H1 (cell line): ENCODE measurements at regions of chr14 and their contacts with region 1.

Region 1: DNA sequence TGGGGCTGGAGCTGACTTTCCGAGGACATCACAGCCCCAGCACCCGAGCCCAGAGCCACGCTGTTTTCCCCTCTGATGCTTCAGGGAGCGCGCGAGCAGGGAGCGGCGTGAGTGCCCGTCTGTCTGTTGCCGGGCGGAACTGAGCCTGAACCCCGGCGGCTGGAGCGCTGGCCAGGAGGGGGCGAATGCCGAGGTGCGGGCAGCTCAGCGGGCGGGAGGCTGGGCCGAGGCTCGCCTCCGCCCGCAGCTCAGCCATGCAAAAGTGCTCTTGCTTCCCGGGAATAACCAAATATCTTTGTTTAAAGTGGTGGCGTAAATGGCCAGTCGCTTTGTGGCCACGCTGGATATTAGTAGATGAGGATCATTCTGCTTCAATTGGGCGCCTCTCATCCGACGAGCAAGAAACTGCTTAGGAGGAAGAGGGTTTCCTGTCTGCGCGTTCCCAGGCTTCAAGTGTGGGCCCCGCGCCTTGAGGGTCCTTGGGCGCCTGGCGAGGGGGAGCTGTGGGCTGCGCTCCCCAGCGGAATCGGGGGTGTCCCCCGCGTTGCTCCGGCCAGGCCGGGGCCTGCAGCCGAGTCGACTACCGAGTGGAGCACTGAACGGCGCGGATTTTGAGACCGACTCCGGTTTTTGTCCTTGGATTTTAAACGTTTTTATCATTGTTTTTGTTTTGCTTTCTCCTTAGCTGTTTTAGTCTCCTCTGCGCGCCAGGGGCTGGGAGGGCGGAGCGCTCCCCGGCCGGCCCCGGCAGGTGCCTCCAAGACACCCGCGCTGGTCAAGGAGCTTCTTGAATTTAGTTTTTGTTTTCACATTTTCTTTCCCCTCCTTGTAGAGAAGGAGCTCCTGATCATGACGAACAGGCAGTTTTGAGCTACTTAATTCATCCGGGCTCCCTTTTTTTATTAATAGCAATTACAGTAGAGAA is 831 bp upstream of the NKX2-1 start:
- DNase-seq: peak in 1 of 2 experiments; percentile 80
- H3K4me3 ChIP-seq: peak overlapping the region in 3 of 4 experiments; percentile 11 to 47 (median 23); a peak in 4 of 8 replicates
- H3K27ac ChIP-seq: no peak overlapping the region
- H3K4me1 ChIP-seq: peaks cover 0 to 25% (median 14%) of the 10 kb centered on the region in 4 experiments; a peak in 6 of 7 replicates
- H3K27me3 ChIP-seq: peaks cover 94 to 100% (median 98%) of the 10 kb centered on the region in 4 experiments
- CTCF ChIP-seq: peak in 2 of 3 experiments; percentile 39 to 46; a peak in 3 of 4 replicates
- EP300 ChIP-seq: no peak
- POLR2A ChIP-seq: no peak
- RAD21 ChIP-seq: peak; percentile 12 to 21; a peak in 2 of 4 replicates

Region 2: GRCh38 chr14:36091096-36091495 is 429.8 kb before region 1 on chr14:
- CTCF ChIA-PET with region 1: interaction called, 12 read pairs
- POLR2A ChIA-PET with region 1: no interaction called
- DNase-seq: no peak
- H3K4me3 ChIP-seq: no peak overlapping the region
- H3K27ac ChIP-seq: no peak overlapping the region
- H3K4me1 ChIP-seq: no peaks in the 10 kb centered on the region
- H3K27me3 ChIP-seq: peaks cover 0 to 1% (median 0%) of the 10 kb centered on the region in 4 experiments; a peak in 1 of 7 replicates
- CTCF ChIP-seq: no peak
- EP300 ChIP-seq: no peak
- POLR2A ChIP-seq: no peak
- RAD21 ChIP-seq: no peak

Region 3: DNA sequence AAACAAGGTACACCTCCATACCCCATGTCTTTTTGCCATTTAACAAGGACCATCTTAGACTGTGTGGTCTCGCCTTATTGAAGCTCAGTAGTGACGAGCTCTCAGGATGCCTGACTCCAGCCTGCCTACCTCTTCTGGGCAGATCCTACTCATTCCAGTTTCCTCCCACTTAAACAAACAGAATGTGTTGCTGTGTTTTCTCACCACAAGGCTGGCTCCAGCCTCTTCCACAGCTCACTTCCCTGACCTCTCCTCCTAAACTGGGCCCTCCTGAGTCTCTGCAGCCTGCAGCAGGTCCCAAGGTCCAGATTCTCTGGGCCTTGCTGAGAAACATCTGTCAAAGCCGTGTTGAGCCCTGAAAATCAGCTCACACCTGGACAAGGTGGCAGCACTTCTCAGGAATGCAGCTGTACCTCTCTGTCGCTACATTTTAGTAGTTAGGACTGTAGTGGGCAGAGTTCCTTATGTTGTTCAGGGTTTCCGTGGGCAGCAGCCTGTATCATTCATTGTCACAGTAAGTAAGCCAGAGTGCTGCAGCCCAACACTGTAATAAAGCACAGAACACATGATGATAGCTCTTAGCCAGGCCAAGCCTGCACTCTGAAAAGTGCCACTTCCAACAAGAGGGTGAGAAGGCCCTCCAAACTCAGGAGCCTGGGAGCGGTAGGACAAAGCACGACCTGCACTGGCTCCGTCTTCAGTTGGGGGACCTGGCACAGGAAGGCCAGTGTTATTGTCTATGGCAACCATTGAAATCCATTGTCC is 69.4 kb before region 1 on chr14:
- CTCF ChIA-PET with region 1: interaction called, 68 read pairs
- POLR2A ChIA-PET with region 1: no interaction called
- DNase-seq: no peak
- H3K4me3 ChIP-seq: no peak overlapping the region
- H3K27ac ChIP-seq: no peak overlapping the region
- H3K4me1 ChIP-seq: no peaks in the 10 kb centered on the region; a peak in 1 of 7 replicates
- H3K27me3 ChIP-seq: peaks cover 0 to 13% (median 3%) of the 10 kb centered on the region in 4 experiments; a peak in 5 of 7 replicates
- CTCF ChIP-seq: no peak
- EP300 ChIP-seq: no peak
- POLR2A ChIP-seq: no peak
- RAD21 ChIP-seq: no peak

Region 4: DNA sequence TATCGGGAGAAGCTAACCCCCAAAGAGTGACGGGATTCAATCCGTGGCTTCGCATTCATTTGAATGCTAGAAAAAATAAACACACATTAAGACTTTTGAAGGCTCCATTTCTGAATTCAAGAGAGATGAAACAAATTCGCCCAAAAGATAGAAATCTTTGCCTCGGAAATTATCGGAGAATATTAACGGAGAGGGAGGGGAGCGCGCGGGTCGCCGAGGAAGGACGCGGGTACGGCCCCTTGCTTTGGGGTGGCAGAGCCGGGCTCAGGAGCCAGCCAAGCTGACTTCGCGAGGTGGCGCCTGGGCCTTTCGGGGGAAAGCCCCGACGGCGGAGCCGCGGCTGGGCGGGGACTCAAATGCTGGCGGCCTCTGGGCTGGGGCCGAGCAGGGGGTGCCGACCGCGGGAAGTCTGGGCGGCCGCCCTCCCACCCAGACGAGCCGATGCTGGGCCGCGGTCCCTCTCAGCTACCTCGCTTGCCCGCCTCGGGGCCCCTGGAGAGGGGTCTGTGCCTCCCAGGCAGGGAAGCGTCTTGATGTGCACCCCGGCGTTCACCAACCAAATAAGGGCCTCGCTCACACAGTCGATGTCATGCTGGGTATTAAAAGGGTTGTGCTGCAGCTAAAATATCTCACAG is 15.6 kb before region 1 on chr14:
- CTCF ChIA-PET with region 1: interaction called, 202 read pairs
- POLR2A ChIA-PET with region 1: interaction called, 19 read pairs
- DNase-seq: no peak
- H3K4me3 ChIP-seq: peak overlapping the region in 3 of 4 experiments; percentile 12 to 47 (median 26); a peak in 4 of 8 replicates
- H3K27ac ChIP-seq: no peak overlapping the region
- H3K4me1 ChIP-seq: peaks cover 10 to 22% (median 17%) of the 10 kb centered on the region in 4 experiments
- H3K27me3 ChIP-seq: peaks cover 78 to 100% (median 91%) of the 10 kb centered on the region in 4 experiments
- CTCF ChIP-seq: no peak
- EP300 ChIP-seq: no peak
- POLR2A ChIP-seq: no peak
- RAD21 ChIP-seq: no peak

Region 5: DNA sequence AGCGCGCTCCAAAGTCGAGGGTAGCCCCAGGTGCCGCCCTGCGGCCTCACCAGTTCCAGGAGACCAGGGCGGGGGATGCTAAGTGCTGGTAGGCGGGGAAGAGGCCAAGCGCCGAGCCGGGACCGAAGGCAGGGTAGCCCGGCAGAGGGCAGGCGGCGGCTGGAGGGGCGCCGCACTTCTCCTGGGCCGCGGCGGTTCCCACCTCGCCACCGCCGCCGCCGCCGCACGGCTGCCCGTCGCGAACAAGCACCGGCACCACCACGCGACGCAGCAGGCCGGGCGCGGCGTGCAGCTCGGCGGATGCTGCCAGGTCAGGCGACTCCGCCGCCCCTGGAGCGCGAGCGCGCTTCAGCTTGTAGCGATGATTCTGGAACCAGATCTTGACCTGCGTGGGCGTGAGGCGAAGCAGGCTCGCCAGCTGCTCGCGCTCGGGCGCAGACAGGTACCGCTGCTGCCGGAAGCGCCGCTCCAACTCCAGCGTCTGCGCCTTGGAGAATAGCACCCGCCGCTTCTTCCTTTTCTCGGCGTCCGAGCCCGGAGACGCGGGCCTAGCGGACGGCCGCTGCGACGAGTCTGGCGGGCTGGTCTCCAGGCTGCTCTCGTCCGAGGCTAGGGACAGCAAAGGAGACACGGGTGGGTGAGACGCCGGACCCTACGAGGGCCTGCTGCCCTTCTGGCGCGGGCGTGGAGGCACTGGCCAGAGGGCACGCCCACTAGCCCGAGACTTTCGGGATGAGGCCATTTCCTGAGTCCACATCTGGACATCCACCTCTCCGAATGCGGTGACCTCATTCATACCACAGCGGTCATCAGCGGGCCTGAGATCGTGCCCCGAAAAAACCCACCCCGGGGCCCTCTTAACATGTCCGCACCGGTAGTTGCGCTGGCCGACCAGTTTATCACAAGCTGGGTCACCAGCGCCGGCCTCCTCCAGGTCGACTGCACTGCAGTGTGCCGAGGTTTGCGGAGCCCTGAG is 60.3 kb after region 1 on chr14:
- CTCF ChIA-PET with region 1: interaction called, 395 read pairs
- POLR2A ChIA-PET with region 1: interaction called, 8 read pairs
- DNase-seq: peak in 1 of 2 experiments; percentile 74
- H3K4me3 ChIP-seq: peak overlapping the region in 3 of 4 experiments; percentile 19 to 58 (median 26); a peak in 7 of 8 replicates
- H3K27ac ChIP-seq: no peak overlapping the region
- H3K4me1 ChIP-seq: peaks cover 0 to 21% (median 11%) of the 10 kb centered on the region in 4 experiments; a peak in 5 of 7 replicates
- H3K27me3 ChIP-seq: peaks cover 95 to 100% (median 97%) of the 10 kb centered on the region in 4 experiments
- CTCF ChIP-seq: 0 out of 4 replicates have a peak, but pooled peaks of 1 of the 3 experiments have one; percentile 2
- EP300 ChIP-seq: no peak
- POLR2A ChIP-seq: no peak
- RAD21 ChIP-seq: no peak

Region 6: DNA sequence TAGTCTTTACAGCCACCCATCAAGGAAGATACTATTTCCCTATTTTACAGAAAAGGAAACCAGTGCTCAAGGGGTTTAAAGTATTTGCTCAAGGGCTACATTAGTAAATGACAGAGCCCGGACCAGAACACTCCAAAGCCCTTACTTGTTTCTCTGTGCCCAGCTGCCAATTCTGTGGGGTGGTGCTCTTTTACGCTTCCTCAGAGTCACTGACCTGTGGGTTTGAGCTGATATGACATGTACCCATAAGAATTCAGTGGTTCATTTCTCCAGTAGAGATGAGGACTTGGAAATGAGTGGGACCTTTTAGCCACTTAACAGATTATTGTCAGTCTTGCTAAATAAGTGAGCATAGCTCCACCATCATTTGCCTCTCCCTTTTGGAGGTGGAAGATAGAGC is 99.0 kb after region 1 on chr14:
- CTCF ChIA-PET with region 1: interaction called, 14 read pairs
- POLR2A ChIA-PET with region 1: no interaction called
- DNase-seq: no peak
- H3K4me3 ChIP-seq: no peak overlapping the region
- H3K27ac ChIP-seq: no peak overlapping the region
- H3K4me1 ChIP-seq: no peaks in the 10 kb centered on the region
- H3K27me3 ChIP-seq: no peaks in the 10 kb centered on the region
- CTCF ChIP-seq: no peak
- EP300 ChIP-seq: no peak
- POLR2A ChIP-seq: no peak
- RAD21 ChIP-seq: no peak

Region 7: DNA sequence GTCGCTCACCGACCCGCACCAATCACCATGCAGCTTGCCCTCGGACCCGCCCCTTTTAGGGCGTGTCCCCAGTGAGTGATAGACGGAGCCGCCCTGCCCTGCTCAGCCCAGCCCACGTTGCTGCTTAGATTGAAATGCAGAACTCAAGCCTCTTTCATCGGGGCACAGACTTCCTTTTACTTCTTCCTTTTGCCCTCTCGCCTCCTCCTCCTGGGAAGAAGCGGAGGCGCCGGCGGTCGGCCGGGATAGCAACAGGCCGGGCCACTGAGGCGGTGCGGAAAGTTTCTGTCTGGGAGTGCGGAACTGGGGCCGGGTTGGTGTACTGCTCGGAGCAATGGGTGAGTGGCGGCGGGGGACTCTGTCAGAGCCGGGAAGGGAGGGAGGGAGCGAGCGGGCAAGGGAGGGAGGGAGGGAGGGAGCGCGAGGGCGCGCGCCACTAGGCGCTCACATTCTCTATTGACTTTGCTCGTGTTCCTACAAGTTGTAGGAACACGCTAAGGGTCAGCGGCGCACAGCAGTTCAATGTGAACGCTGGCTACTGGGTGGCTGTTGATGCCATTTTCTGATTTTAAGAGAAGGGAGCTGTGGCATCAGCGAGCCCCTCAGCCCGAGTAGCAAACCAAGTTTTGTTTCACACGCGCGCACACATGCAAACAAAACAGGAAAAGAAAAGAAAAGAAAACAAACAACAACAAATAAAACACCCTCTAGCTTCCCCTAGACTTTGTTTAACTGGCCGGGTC is 141.1 kb after region 1 on chr14 and contains the start of gene PAX9:
- CTCF ChIA-PET with region 1: interaction called, 92 read pairs
- POLR2A ChIA-PET with region 1: interaction called, 5 read pairs
- DNase-seq: peak; percentile 92 to 96
- H3K4me3 ChIP-seq: peak within 1 kb of the TSS; percentile 25 to 62 (median 38); a peak in 7 of 8 replicates
- H3K27ac ChIP-seq: no peak within 1 kb of the TSS
- H3K4me1 ChIP-seq: peaks cover 4 to 33% (median 22%) of the 10 kb centered on the region in 4 experiments
- H3K27me3 ChIP-seq: peaks cover 91 to 99% (median 94%) of the 10 kb centered on the region in 4 experiments
- CTCF ChIP-seq: no peak
- EP300 ChIP-seq: no peak
- POLR2A ChIP-seq: no peak
- RAD21 ChIP-seq: 0 out of 4 replicates have a peak, but pooled peaks of 1 of the 2 experiments have one; percentile 1
- total RNA-seq, gene PAX9: not detected in 2 replicates

Region 8: GRCh38 chr14:36690301-36691033 is 169.6 kb after region 1 on chr14:
- CTCF ChIA-PET with region 1: no interaction called
- POLR2A ChIA-PET with region 1: no interaction called
- DNase-seq: no peak
- H3K4me3 ChIP-seq: no peak overlapping the region
- H3K27ac ChIP-seq: no peak overlapping the region
- H3K4me1 ChIP-seq: no peaks in the 10 kb centered on the region
- H3K27me3 ChIP-seq: no peaks in the 10 kb centered on the region
- CTCF ChIP-seq: no peak
- EP300 ChIP-seq: no peak
- POLR2A ChIP-seq: no peak
- RAD21 ChIP-seq: no peak

Region 9: GRCh38 chr14:36747411-36748184 is 226.7 kb after region 1 on chr14:
- CTCF ChIA-PET with region 1: no interaction called
- POLR2A ChIA-PET with region 1: no interaction called
- DNase-seq: no peak
- H3K4me3 ChIP-seq: no peak overlapping the region
- H3K27ac ChIP-seq: no peak overlapping the region
- H3K4me1 ChIP-seq: peaks cover 0 to 2% (median 0%) of the 10 kb centered on the region in 4 experiments; a peak in 1 of 7 replicates
- H3K27me3 ChIP-seq: no peaks in the 10 kb centered on the region
- CTCF ChIP-seq: peak; percentile 21 to 60 (median 41)
- EP300 ChIP-seq: no peak
- POLR2A ChIP-seq: no peak
- RAD21 ChIP-seq: peak; percentile 8 to 37; a peak in 1 of 4 replicates